Caco-2 (cell line): ENCODE measurements at regions of chr22 and their contacts with region 1.

Region 1: GRCh38 chr22:22884010-22884887 is 3.4 kb upstream of the IGLL5 start:
- DNase-seq: peak; percentile 65 to 77
- H3K4me3 ChIP-seq: no peak overlapping the region
- H3K4me3 Mint-ChIP-seq: no peak overlapping the region
- H3K27ac Mint-ChIP-seq: no peak overlapping the region
- H3K4me1 ChIP-seq: no peaks in the 10 kb centered on the region
- H3K4me1 Mint-ChIP-seq: no peaks in the 10 kb centered on the region
- H3K27me3 ChIP-seq: no peaks in the 10 kb centered on the region
- H3K27me3 Mint-ChIP-seq: peaks cover 7% of the 10 kb centered on the region
- CTCF ChIP-seq: peak; percentile 66 to 71

Region 2: DNA sequence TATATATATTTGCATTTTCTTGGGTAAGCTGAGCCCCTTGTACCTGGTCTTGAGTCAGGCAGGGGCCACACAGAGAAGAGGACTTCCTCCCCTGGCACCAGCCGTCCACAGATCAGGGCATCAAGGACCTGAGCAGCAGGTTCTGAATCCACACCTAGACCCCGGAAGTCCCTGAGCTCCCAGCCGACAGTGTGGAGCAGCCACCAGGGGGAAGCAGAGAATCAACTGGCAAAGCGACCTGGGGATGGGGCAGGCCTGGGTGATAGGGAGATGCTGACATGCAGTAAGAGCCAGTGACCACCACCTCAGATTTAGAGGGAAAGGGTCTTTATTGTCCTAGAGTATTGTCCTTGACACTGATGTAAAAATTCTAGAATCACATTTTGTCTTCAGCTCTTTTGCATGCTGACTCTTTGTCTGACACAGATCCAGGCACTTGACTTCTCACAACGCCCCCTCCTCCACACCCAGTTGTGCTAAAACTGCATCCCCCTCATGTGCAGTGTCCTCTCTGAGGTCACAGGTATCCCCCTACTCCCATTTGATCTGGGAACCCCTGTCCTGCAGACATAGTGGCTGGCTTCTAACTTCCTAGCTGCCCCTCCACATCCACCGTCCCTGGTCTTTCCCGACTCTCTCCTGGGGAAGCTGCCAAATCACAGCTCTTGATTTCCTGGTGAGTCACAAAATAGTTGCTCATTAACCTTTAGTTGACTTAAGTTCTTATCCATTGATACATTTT is 130.6 kb before region 1 on chr22:
- CTCF ChIA-PET with region 1: interaction called, 45 read pairs
- POLR2A ChIA-PET with region 1: no interaction called
- intact Hi-C with region 1: loop called (anchors 2 kb)
- DNase-seq: peak; percentile 78 to 80
- H3K4me3 ChIP-seq: no peak overlapping the region
- H3K4me3 Mint-ChIP-seq: no peak overlapping the region
- H3K27ac Mint-ChIP-seq: no peak overlapping the region
- H3K4me1 ChIP-seq: no peaks in the 10 kb centered on the region
- H3K4me1 Mint-ChIP-seq: no peaks in the 10 kb centered on the region
- H3K27me3 ChIP-seq: no peaks in the 10 kb centered on the region; the same call in 1 of the 2 replicates
- H3K27me3 Mint-ChIP-seq: no peaks in the 10 kb centered on the region
- CTCF ChIP-seq: peak; percentile 59 to 91

Region 3: DNA sequence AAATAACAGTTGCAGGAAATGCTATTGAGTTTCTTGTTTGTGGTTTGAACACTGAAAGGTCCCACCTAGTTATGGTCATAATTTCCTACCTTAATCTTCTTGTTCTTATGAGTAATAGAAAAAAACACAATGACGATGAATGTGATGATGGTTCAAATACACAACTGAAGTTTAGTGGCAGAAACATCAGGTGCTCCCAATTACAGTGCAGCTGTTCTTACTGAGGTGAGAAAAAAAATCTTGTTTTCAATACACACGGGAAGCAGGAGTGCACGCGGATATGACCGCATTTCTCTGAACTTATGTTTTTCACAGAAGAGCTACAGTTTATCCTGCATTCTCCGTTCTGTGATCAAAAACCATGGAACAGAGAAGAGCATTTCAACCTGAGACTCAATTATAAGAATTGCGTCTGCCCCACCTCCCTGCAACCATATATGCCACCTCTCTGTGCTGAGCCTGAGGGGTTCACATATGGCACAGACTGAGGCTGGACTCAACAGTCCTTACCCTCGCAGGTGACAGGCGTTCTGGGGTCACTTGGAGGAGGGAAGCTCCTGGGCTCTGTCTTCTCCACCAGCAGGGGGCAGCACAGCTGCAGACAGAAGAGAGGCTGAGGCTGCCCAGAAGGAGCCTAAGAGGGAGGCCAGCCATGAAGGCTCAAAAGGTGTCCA is 96.3 kb before region 1 on chr22:
- CTCF ChIA-PET with region 1: interaction called, 11 read pairs
- POLR2A ChIA-PET with region 1: no interaction called
- intact Hi-C with region 1: loop called (anchors 5 kb)
- DNase-seq: peak in 1 of 2 experiments; percentile 64
- H3K4me3 ChIP-seq: no peak overlapping the region
- H3K4me3 Mint-ChIP-seq: no peak overlapping the region
- H3K27ac Mint-ChIP-seq: no peak overlapping the region
- H3K4me1 ChIP-seq: peaks cover 51% of the 10 kb centered on the region
- H3K4me1 Mint-ChIP-seq: peaks cover 12% of the 10 kb centered on the region
- H3K27me3 ChIP-seq: no peaks in the 10 kb centered on the region
- H3K27me3 Mint-ChIP-seq: no peaks in the 10 kb centered on the region
- CTCF ChIP-seq: peak; percentile 64 to 84

Region 4: GRCh38 chr22:22848364-22848866 is 35.8 kb before region 1 on chr22:
- CTCF ChIA-PET with region 1: interaction called, 29 read pairs
- POLR2A ChIA-PET with region 1: no interaction called
- intact Hi-C with region 1: loop called (anchors 2 kb)
- DNase-seq: peak; percentile 74 to 81
- H3K4me3 ChIP-seq: no peak overlapping the region
- H3K4me3 Mint-ChIP-seq: no peak overlapping the region
- H3K27ac Mint-ChIP-seq: no peak overlapping the region
- H3K4me1 ChIP-seq: no peaks in the 10 kb centered on the region
- H3K4me1 Mint-ChIP-seq: no peaks in the 10 kb centered on the region
- H3K27me3 ChIP-seq: no peaks in the 10 kb centered on the region
- H3K27me3 Mint-ChIP-seq: peaks cover under 1% of the 10 kb centered on the region
- CTCF ChIP-seq: peak; percentile 85 to 92

Region 5: DNA sequence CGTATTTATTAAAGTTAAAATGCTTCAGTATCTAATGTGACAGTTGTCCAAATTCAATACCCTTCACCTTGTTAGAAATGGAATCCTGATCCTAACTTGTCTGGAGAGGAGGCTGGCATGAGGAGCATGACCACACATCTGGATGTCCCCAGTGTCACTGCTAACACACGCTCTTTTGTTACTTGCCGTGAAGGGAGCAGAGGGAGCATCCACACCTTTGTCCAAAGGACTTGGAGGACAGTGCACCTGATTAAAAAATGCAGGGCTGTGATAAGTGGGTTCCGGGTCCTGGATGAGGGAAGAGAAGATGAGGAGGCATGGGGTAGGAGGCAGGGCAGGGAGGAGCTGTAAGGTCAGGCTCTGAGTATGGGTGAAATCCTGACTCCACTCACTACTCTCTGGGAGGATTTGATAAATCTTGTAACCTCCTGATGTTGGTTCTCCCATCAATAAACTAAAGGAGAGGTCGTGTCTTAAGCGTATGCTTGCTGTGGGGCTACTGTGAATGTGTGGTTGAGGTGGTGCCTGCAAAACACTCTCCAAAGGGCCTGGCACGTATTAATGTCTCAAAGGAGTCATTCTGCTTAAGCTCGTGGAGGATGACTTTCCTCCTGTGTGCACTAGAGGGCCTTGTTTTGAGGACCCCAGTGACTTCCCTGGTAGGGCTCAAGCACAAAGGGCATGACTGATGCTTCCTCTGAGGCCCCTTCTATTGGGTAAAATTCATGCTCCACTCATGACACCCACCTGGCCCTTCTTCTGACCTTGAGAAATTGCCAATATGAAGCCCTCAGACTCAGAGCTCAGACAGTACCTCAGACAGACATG is 13.5 kb before region 1 on chr22:
- CTCF ChIA-PET with region 1: interaction called, 10 read pairs
- POLR2A ChIA-PET with region 1: no interaction called
- intact Hi-C with region 1: no loop called
- DNase-seq: no peak
- H3K4me3 ChIP-seq: no peak overlapping the region
- H3K4me3 Mint-ChIP-seq: no peak overlapping the region
- H3K27ac Mint-ChIP-seq: no peak overlapping the region
- H3K4me1 ChIP-seq: no peaks in the 10 kb centered on the region
- H3K4me1 Mint-ChIP-seq: no peaks in the 10 kb centered on the region
- H3K27me3 ChIP-seq: no peaks in the 10 kb centered on the region
- H3K27me3 Mint-ChIP-seq: peaks cover 4% of the 10 kb centered on the region
- CTCF ChIP-seq: peak; percentile 9 to 29